Activated B cell treated with CpG ODN at 0.5 μM for 24 hours (primary cell): ENCODE measurements at regions of chr5 and their contacts with region 1.

Region 1: GRCh38 chr5:62305715-62306322 is at the start of gene KIF2A:
- DNase-seq: peak; percentile 93
- ATAC-seq: peak; percentile 91
- H3K4me3 Mint-ChIP-seq: peak within 1 kb of the TSS; percentile 98
- H3K27ac Mint-ChIP-seq: peak within 1 kb of the TSS; percentile 98
- H3K4me1 Mint-ChIP-seq: peaks cover 46% of the 10 kb centered on the region
- H3K27me3 Mint-ChIP-seq: no peaks in the 10 kb centered on the region
- CTCF ChIP-seq: no peak
- total RNA-seq, gene KIF2A: 42.6 and 45.9 TPM in 2 replicates

Region 2: GRCh38 chr5:60944904-60945812 is 1360.7 kb before region 1 on chr5 and contains the starts of genes ERCC8 and NDUFAF2:
- CTCF ChIA-PET with region 1: no interaction called
- POLR2A ChIA-PET with region 1: no interaction called
- intact Hi-C with region 1: loop called (anchors 5 kb)
- DNase-seq: peak; percentile 75
- ATAC-seq: peak; percentile 98
- H3K4me3 Mint-ChIP-seq: no peak within 1 kb of the TSS
- H3K27ac Mint-ChIP-seq: no peak within 1 kb of the TSS
- H3K4me1 Mint-ChIP-seq: peaks cover 28% of the 10 kb centered on the region
- H3K27me3 Mint-ChIP-seq: no peaks in the 10 kb centered on the region
- CTCF ChIP-seq: no peak
- total RNA-seq, gene ERCC8: 10.7 and 11.2 TPM in 2 replicates
- total RNA-seq, gene NDUFAF2: 13.1 and 20.0 TPM in 2 replicates

Region 3: GRCh38 chr5:62340392-62340791 is 34.6 kb after region 1 on chr5:
- CTCF ChIA-PET with region 1: no interaction called
- POLR2A ChIA-PET with region 1: no interaction called
- intact Hi-C with region 1: loop called (anchors 2 kb)
- DNase-seq: no peak
- ATAC-seq: no peak
- H3K4me3 Mint-ChIP-seq: no peak overlapping the region
- H3K27ac Mint-ChIP-seq: no peak overlapping the region
- H3K4me1 Mint-ChIP-seq: peaks cover 35% of the 10 kb centered on the region
- H3K27me3 Mint-ChIP-seq: no peaks in the 10 kb centered on the region
- CTCF ChIP-seq: no peak

Region 4: DNA sequence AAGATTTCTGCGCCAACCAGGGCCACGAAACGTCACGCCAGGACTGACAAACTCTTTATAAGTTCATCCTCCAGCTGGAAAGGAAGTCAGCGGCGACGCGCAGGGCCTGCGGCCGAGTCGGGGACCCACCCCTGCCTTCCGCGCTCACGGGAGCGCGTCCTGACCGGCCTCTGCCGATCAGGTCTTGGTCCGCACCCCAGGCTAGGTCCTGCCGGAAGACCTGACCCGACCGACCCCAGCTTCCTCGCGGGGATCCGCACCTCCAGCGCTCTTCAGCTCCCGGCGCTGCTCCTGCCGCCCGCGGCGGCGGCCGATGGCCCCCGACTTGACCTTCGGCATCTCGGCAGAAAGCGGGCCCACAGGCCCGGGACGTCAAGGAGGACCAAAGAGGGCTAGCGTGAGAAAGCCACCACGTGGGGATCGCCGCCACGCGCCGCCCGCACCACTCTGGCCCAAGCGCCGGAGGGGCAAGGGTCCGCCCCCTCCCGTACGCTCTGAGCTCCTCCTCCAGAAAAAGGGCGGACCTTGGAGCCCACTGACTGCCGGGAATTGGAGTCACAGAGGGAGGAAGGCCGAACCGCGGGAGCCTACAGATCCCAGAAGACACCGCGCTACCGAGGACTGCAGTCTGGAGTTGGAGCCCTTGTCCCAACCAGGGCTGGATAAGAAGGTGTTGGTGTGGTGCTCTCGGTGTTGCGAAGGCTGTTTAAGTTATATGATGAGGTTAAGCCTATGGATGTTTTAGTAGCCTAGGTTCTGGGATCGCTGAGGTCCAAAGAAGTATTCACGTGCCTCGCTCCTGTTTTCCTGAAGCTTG is 97.8 kb after region 1 on chr5 and contains the start of gene DIMT1:
- CTCF ChIA-PET with region 1: interaction called, 3 read pairs
- POLR2A ChIA-PET with region 1: interaction called, 32 read pairs
- intact Hi-C with region 1: loop called (anchors 1 kb)
- DNase-seq: peak; percentile 86
- ATAC-seq: peak; percentile 97
- H3K4me3 Mint-ChIP-seq: peak within 1 kb of the TSS; percentile 94
- H3K27ac Mint-ChIP-seq: peak within 1 kb of the TSS; percentile 89
- H3K4me1 Mint-ChIP-seq: peaks cover 23% of the 10 kb centered on the region
- H3K27me3 Mint-ChIP-seq: no peaks in the 10 kb centered on the region
- CTCF ChIP-seq: no peak
- total RNA-seq, gene DIMT1: 28.2 and 28.7 TPM in 2 replicates

Region 5: DNA sequence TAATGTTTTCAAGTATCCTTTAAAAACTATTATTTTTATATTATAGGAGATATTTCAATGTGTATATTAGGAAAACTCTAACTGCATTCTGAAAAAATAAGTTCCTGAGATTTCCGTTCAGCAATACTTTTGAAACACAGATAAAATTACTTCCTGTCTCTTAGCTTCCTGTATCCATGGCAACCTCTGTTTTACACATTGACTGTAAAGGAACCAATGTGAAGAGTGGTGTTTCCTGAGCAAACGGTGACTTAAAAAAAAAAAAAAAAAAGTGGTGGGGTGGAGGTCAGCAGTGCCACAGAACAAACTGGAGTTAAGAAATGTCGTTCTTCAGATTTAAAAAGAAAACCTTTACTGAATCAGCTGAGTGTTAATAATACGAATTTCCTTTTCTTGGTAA is 272.7 kb after region 1 on chr5 and contains the start of gene LRRC70:
- CTCF ChIA-PET with region 1: no interaction called
- POLR2A ChIA-PET with region 1: no interaction called
- intact Hi-C with region 1: loop called (anchors 5 kb)
- DNase-seq: no peak
- ATAC-seq: peak; percentile 68
- H3K4me3 Mint-ChIP-seq: peak within 1 kb of the TSS; percentile 66
- H3K27ac Mint-ChIP-seq: peak within 1 kb of the TSS; percentile 71
- H3K4me1 Mint-ChIP-seq: peaks cover 10% of the 10 kb centered on the region
- H3K27me3 Mint-ChIP-seq: no peaks in the 10 kb centered on the region
- CTCF ChIP-seq: no peak
- total RNA-seq, gene LRRC70: 0.84 and 1.2 TPM in 2 replicates